ENCODE measurements at regions of chr1 and their contacts with region 1.

Region 1: GRCh38 chr1:32876341-32877210 is 5.9 kb upstream of the FNDC5 start:
- DNase-seq: peak; percentile 80
- H3K4me3 Mint-ChIP-seq: no peak overlapping the region
- H3K27ac Mint-ChIP-seq: no peak overlapping the region
- H3K4me1 Mint-ChIP-seq: peaks cover 2% of the 10 kb centered on the region
- H3K27me3 Mint-ChIP-seq: peaks cover 79% of the 10 kb centered on the region

Region 2: GRCh38 chr1:32650752-32651460 is 225.7 kb before region 1 on chr1 and contains the start of gene RBBP4:
- CTCF ChIA-PET with region 1: no interaction called
- DNase-seq: peak; percentile 98
- H3K4me3 Mint-ChIP-seq: peak within 1 kb of the TSS; percentile 89
- H3K27ac Mint-ChIP-seq: peak within 1 kb of the TSS; percentile 99
- H3K4me1 Mint-ChIP-seq: peaks cover 60% of the 10 kb centered on the region
- H3K27me3 Mint-ChIP-seq: no peaks in the 10 kb centered on the region

Region 3: DNA sequence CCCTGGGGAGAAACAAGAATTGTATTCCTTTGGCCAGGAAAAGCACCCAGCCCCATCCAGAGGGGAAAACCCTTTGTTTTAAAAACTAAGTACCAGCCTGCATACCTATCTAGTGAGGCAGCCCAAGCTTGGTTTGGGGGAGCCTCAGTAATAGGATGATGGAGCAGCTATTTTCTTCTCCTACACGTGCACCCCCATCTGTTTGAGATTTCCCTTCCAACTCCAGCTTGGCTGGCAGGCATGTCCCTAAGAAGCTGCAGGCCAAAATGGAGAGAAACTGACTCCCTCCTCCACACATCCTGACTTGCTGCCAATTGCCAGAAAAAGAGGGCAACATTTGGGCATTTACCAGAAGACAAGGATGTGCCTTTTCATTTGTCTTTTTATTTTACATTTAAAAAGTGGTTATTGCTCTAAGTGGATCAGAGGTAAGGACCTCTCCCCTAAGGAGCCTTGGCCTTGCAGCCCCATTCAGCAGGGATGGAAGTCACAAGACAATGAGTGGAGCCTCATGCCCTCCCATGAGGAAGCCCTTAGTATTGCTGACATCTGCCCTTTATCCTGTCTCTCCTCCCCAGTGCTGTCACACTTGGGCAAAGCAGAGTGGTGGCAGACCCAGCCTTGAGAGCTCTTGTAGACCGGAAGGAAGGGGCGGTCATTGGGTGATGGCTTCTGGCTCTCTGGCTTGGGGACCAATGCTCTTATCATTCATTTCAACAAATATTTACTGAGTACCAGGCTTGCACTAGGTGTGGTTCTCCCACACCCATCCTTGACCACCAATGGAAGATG is 14.5 kb before region 1 on chr1:
- CTCF ChIA-PET with region 1: interaction called, 12 read pairs
- DNase-seq: no peak
- H3K4me3 Mint-ChIP-seq: no peak overlapping the region
- H3K27ac Mint-ChIP-seq: no peak overlapping the region
- H3K4me1 Mint-ChIP-seq: no peaks in the 10 kb centered on the region
- H3K27me3 Mint-ChIP-seq: no peaks in the 10 kb centered on the region

Region 4: GRCh38 chr1:32892368-32893197 is 16.0 kb after region 1 on chr1:
- CTCF ChIA-PET with region 1: interaction called, 27 read pairs
- DNase-seq: peak; percentile 46
- H3K4me3 Mint-ChIP-seq: peak overlapping the region; percentile 23
- H3K27ac Mint-ChIP-seq: no peak overlapping the region
- H3K4me1 Mint-ChIP-seq: peaks cover 10% of the 10 kb centered on the region
- H3K27me3 Mint-ChIP-seq: peaks cover 95% of the 10 kb centered on the region

Region 5: GRCh38 chr1:33086384-33086850 is 209.8 kb after region 1 on chr1:
- CTCF ChIA-PET with region 1: interaction called, 68 read pairs
- DNase-seq: peak; percentile 64
- H3K4me3 Mint-ChIP-seq: no peak overlapping the region
- H3K27ac Mint-ChIP-seq: no peak overlapping the region
- H3K4me1 Mint-ChIP-seq: peaks cover 39% of the 10 kb centered on the region
- H3K27me3 Mint-ChIP-seq: peaks cover 29% of the 10 kb centered on the region

Measured in activated naive CD4-positive, alpha-beta T cell treated with anti-CD3 and anti-CD28 coated beads, Interleukin-2, amount 10 ng/mL, durations not matched to agents 7 days and 5 days (primary cell).